Activated B cell treated with CpG ODN at 0.5 μM for 24 hours (primary cell): ENCODE measurements at regions of chr1 and their contacts with region 1.

Region 1: DNA sequence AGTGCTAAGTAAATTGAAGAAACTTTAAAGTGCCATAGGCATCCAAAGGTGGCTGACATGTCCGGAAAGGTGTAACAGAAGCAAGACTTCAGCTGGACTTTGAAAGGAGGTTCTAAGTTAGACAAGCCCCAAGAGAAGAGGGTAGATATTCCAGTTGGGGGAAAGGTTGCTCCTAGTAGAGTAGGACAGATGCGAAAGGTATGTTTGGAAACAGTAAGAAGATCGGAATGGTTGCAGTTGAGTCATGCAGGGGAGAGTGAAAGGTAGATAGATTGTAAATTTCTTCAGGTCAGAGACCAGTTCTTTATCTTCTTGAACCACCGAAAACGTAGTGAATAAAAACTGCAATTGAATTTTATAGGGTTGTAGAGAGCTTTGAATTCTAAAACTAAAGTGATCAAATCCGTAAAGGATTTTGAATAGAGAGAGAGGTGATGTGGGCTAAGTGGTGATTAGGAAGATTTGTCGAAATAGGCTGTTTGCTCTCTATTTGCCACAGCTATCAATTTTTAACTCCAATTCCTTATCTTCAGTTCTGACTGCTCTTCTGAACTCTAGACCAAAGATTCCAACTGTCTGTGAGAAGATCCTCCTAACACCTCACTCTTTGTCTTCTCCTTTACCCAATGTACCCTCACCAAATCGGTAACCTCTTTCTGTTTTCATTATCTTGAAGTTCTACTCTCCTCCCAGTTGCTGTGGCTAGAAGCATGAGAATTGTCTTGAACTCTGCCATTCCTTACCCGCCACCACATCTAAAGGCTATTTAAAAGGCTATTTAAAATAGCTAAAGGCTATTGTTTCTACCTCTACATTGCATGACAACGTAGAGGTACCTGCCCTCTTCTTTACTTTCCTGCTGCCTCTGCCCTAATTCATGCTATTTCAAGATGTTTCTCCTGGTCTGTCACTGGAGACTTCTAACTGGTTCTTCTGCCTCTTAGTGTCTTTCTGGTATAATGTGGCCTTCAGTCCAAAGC is 16.7 kb downstream of the MACF1 start:
- DNase-seq: no peak
- ATAC-seq: no peak
- H3K4me3 Mint-ChIP-seq: no peak overlapping the region
- H3K27ac Mint-ChIP-seq: no peak overlapping the region
- H3K4me1 Mint-ChIP-seq: peaks cover 68% of the 10 kb centered on the region
- H3K27me3 Mint-ChIP-seq: no peaks in the 10 kb centered on the region
- CTCF ChIP-seq: no peak

Region 2: DNA sequence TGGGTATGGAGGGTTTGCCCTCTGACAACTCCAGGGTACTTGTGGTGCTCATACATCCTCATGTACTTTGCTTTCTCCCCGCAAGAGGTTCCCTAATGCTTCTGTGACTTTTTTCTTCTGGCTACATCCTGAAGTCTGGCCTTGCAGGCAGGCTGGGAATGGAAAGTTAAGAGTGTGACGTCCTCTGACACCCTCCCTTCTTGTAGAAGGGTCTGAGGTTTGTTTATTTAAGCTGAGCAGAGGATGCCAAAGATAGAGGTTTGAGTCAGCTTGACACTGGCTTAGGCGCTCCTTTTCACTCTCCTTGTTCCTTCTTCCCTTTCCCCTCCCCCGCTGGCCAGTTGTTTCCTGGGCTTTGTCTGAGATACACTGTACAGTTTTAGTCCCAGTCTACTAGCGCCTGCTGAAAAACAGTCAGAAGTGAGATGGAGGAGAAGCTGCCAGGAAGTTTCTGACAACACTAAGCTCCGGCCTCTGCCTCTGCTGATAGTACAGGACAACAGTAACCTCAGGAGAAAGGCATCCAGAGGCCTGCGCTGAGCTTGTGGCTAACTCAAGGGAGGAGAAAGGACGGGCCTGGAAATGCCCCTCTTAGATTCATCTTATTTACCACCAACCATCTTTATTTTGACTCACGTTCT is 16.6 kb before region 1 on chr1 and contains the start of gene MACF1:
- CTCF ChIA-PET with region 1: no interaction called
- POLR2A ChIA-PET with region 1: interaction called, 12 read pairs
- intact Hi-C with region 1: loop called (anchors 2 kb)
- DNase-seq: no peak
- ATAC-seq: no peak
- H3K4me3 Mint-ChIP-seq: peak within 1 kb of the TSS; percentile 70
- H3K27ac Mint-ChIP-seq: peak within 1 kb of the TSS; percentile 61
- H3K4me1 Mint-ChIP-seq: peaks cover 31% of the 10 kb centered on the region
- H3K27me3 Mint-ChIP-seq: no peaks in the 10 kb centered on the region
- CTCF ChIP-seq: no peak
- total RNA-seq, gene MACF1: 235 and 286 TPM in 2 replicates

Region 3: DNA sequence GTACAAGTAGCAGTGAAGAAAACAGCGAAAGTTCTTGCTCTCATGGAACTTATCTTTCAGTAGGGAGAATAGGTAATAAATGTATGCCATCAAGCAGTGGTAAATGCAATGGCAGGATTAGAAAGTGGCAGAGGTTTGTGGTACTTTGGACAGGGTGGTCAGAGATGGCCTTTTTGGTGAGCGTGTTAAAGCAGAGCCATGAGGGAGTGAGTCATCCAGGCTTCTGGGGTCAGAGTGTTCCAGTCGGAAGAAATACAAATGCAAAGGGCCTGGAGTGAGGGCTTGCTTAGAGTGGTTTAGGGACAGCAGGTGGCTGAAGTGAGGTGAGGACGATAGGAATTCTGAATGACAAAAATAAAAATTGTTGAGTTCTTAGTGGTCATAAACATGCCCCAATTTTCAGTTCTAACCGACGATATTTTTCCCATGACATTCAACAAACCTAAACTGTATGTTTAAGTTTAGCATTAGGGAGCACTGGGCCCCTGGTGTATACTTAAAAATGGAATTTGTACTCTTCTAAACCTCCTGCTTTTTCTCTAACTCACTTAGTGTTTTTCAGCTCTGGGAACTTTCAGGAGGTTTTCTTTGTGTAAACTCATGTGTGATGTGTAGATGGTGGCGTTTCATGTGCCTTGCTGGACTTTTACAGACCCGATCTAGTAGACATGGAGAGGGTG is 61.5 kb after region 1 on chr1:
- CTCF ChIA-PET with region 1: no interaction called
- POLR2A ChIA-PET with region 1: no interaction called
- intact Hi-C with region 1: no loop called
- DNase-seq: no peak
- ATAC-seq: no peak
- H3K4me3 Mint-ChIP-seq: no peak overlapping the region
- H3K27ac Mint-ChIP-seq: no peak overlapping the region
- H3K4me1 Mint-ChIP-seq: peaks cover 17% of the 10 kb centered on the region
- H3K27me3 Mint-ChIP-seq: no peaks in the 10 kb centered on the region
- CTCF ChIP-seq: no peak